ENCODE measurements at regions of chr13 and their contacts with region 1.

Region 1: DNA sequence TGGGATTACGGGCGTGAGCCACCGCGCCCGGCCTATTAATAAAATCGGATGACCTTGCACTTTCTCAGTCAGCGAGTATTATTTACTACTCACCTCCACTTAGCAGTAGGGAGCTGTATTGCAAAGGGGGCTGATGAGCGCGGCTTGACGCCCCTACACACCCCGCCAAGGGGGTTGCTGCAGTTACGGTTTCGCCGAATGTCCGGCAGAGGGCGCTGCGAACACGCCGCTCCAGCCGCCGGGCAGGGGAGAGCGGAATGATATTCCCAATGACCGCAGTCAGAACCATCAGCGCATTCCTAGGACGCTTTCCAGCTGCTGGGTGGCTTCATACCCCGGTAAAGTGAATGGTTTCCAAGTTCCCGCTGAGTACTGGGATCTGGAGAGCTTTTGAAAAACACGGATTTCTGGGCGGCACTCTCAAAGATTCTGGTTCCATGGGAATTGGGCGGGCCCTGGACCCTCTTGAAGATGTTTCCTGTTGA is 30.0 kb upstream of the TPT1 start:
- DNase-seq: peak; percentile 82 to 87 (median 83)
- H3K4me3 ChIP-seq: no peak overlapping the region
- H3K27ac ChIP-seq: no peak overlapping the region
- H3K4me1 ChIP-seq: peaks cover 3% of the 10 kb centered on the region
- H3K27me3 ChIP-seq: no peaks in the 10 kb centered on the region
- CTCF ChIP-seq: peak; percentile 83 to 94 (median 84)
- EP300 ChIP-seq: no peak
- POLR2A ChIP-seq: no peak

Region 2: GRCh38 chr13:45511310-45512097 is 140.5 kb after region 1 on chr13:
- intact Hi-C with region 1: loop called in 1 of 4 experiments (anchors 10 kb)
- DNase-seq: no peak
- H3K4me3 ChIP-seq: no peak overlapping the region
- H3K27ac ChIP-seq: no peak overlapping the region
- H3K4me1 ChIP-seq: no peaks in the 10 kb centered on the region
- H3K27me3 ChIP-seq: no peaks in the 10 kb centered on the region
- CTCF ChIP-seq: peak; percentile 67 to 81 (median 72)
- EP300 ChIP-seq: no peak
- POLR2A ChIP-seq: no peak

Measured in ovary (tissue), 10 donors.